ENCODE measurements at regions of chr9 and their contacts with region 1.

Region 1: DNA sequence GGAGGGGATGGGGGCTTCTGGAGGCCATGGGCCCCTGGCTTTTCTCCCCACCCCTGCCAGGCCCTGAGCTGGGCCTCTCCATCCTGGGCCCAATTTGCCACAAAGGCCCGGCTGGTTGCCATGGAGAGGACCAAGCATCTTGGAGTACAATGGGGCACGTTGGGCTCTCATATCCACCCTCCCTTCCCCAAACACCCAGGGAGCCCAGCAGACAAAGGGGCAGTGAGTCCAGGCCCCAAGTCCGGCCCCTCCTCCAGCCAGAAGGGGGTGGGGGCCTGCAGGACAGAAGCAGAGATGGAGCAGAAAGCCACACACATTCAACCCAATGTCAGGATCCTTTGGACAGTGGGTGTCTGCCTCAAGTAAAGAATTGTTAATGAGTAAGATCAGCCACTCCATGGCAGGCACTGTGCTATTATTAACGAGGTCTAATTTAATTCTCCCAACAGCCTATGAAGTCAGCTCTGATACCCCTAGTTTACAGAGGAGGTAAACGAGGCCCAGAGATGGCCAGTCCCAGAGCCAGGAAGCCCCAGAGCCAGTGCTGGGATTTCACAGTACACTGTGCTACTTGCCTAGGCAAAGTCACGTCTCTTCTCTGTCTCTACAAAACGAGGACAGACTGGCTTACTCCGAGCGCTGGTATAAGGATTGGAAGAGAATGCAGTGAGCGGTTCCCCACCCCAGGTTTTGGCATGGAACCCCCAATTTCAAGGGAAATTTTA is 2.3 kb downstream of the CRB2 start:
- DNase-seq: no peak
- ATAC-seq: no peak
- H3K4me3 Mint-ChIP-seq: no peak overlapping the region
- H3K27ac Mint-ChIP-seq: no peak overlapping the region
- H3K4me1 Mint-ChIP-seq: peaks cover 22% of the 10 kb centered on the region
- H3K27me3 Mint-ChIP-seq: no peaks in the 10 kb centered on the region
- CTCF ChIP-seq: no peak

Region 2: DNA sequence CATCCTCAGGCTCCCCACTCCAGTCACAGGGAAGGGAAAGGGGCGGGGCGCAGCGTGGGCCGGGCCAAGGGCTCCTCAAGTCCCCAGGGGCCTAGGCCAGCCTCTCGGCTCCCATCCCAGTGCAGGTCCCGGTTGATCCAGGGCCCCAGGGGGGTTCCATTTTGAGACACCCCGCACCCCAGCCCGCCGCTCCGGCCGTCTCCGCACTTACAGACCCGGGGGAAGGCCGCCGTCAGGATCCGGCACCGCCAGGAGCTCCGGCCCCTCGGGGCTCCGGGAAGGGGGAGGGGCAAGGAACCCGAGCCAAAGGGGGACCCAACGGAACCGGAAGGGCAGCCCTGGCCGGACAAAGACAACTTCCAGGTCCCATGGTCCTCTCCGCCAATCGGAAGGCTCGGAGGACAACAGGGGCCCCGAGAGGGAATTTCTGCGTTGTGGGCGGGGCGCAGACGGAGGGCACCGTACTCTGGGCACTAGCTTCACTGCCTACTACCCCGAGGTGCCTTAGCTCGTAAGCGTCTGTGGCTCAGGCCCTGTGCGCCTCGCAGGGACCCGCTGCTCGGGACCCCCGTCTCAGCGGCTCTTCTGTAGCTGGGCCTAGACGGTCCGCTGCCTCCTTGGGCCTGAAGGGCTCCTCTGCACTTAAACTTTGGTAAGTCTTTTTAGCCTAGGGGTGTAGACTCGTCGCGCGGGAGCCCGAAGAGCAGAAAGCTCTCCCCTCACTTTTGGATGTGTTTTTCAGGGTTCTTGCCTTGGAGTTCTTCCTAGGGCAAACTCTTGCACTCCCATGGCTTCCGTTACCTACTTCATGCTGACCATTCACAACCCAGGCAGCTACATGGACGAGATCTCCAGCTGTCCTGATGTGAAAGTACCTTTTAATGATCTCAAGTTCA is 426.9 kb before region 1 on chr9 and contains the start of gene ZBTB26:
- CTCF ChIA-PET with region 1: no interaction called
- POLR2A ChIA-PET with region 1: interaction called, 13 read pairs
- intact Hi-C with region 1: no loop called
- DNase-seq: peak; percentile 80
- ATAC-seq: peak; percentile 98
- H3K4me3 Mint-ChIP-seq: no peak within 1 kb of the TSS
- H3K27ac Mint-ChIP-seq: peak within 1 kb of the TSS; percentile 90
- H3K4me1 Mint-ChIP-seq: peaks cover 22% of the 10 kb centered on the region
- H3K27me3 Mint-ChIP-seq: no peaks in the 10 kb centered on the region
- CTCF ChIP-seq: no peak
- total RNA-seq, gene ZBTB26: 9.7 and 11.9 TPM in 2 replicates

Region 3: GRCh38 chr9:123377211-123377971 is 19.0 kb after region 1 on chr9:
- CTCF ChIA-PET with region 1: interaction called, 3 read pairs
- POLR2A ChIA-PET with region 1: interaction called, 11 read pairs
- intact Hi-C with region 1: no loop called
- DNase-seq: no peak
- ATAC-seq: no peak
- H3K4me3 Mint-ChIP-seq: no peak overlapping the region
- H3K27ac Mint-ChIP-seq: no peak overlapping the region
- H3K4me1 Mint-ChIP-seq: peaks cover 5% of the 10 kb centered on the region
- H3K27me3 Mint-ChIP-seq: peaks cover 13% of the 10 kb centered on the region
- CTCF ChIP-seq: no peak